WTC11 (cell line): ENCODE measurements at regions of chr9 and their contacts with region 1.

Region 1: GRCh38 chr9:19018201-19018600 is 14.8 kb downstream of the SAXO1 start:
- DNase-seq: no peak
- ATAC-seq: no peak
- H3K4me3 Mint-ChIP-seq: no peak overlapping the region
- H3K27ac Mint-ChIP-seq: no peak overlapping the region
- H3K4me1 Mint-ChIP-seq: no peaks in the 10 kb centered on the region
- H3K27me3 Mint-ChIP-seq: 0 out of 2 replicates have a peak, but pooled peaks cover 4% of the 10 kb centered on the region
- CTCF ChIP-seq: no peak

Region 2: GRCh38 chr9:18874069-18874468 is 144.1 kb before region 1 on chr9:
- CTCF ChIA-PET with region 1: no interaction called
- POLR2A ChIA-PET with region 1: no interaction called
- DNase-seq: no peak
- ATAC-seq: no peak
- H3K4me3 Mint-ChIP-seq: no peak overlapping the region
- H3K27ac Mint-ChIP-seq: no peak overlapping the region
- H3K4me1 Mint-ChIP-seq: no peaks in the 10 kb centered on the region
- H3K27me3 Mint-ChIP-seq: no peaks in the 10 kb centered on the region
- CTCF ChIP-seq: no peak

Region 3: DNA sequence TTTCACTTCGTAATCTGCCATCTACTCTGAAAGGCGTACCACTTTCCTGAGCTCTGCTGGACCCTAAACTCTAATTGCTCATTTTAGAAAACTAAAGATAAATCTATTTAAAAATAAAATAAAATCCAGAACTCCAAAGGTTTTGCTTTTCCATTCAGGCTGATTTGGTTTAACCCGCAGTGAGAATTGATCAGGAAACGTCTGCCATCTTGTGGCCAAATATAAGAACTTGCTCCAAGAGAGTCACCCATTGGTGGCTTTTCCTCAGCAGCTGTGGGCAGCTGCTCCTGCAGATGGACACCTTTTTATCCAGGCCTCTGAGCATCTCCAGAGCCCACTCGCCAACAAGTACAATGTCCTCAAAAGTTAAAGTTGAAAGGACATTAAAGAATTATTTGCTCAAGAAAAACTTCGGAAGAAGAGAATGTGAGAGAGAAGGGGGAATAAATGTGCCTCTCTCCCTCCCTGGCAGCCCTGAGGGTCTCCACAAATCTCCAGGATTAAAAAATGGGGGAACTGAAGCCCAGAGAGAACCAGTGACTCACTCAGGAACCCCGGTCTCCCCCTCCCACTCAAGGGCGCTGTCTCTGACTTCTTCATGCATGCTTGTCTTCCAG is 10.7 kb after region 1 on chr9:
- CTCF ChIA-PET with region 1: interaction called, 12 read pairs
- POLR2A ChIA-PET with region 1: no interaction called
- DNase-seq: no peak
- ATAC-seq: peak; percentile 83
- H3K4me3 Mint-ChIP-seq: no peak overlapping the region
- H3K27ac Mint-ChIP-seq: no peak overlapping the region
- H3K4me1 Mint-ChIP-seq: no peaks in the 10 kb centered on the region
- H3K27me3 Mint-ChIP-seq: no peaks in the 10 kb centered on the region; the same call in 1 of the 2 replicates
- CTCF ChIP-seq: peak; percentile 55